ENCODE measurements at regions of chr6 and their contacts with region 1.

Region 1: GRCh38 chr6:163309491-163310026 is 105.0 kb upstream of the QKI start:
- DNase-seq: peak; percentile 82
- ATAC-seq: peak; percentile 65
- H3K4me3 ChIP-seq: peak overlapping the region; percentile 52
- H3K27ac ChIP-seq: peak overlapping the region; percentile 98
- H3K4me1 ChIP-seq: peaks cover 50% of the 10 kb centered on the region
- H3K27me3 ChIP-seq: no peaks in the 10 kb centered on the region
- CTCF ChIP-seq: no peak

Region 2: GRCh38 chr6:163180874-163181541 is 128.6 kb before region 1 on chr6:
- CTCF ChIA-PET with region 1: no interaction called
- POLR2A ChIA-PET with region 1: interaction called, 3 read pairs
- intact Hi-C with region 1: loop called (anchors 1 kb)
- DNase-seq: peak; percentile 77
- ATAC-seq: peak; percentile 97
- H3K4me3 ChIP-seq: no peak overlapping the region
- H3K27ac ChIP-seq: no peak overlapping the region
- H3K4me1 ChIP-seq: peaks cover 4% of the 10 kb centered on the region; the same call in 1 of the 2 replicates
- H3K27me3 ChIP-seq: no peaks in the 10 kb centered on the region
- CTCF ChIP-seq: peak; percentile 84

Region 3: DNA sequence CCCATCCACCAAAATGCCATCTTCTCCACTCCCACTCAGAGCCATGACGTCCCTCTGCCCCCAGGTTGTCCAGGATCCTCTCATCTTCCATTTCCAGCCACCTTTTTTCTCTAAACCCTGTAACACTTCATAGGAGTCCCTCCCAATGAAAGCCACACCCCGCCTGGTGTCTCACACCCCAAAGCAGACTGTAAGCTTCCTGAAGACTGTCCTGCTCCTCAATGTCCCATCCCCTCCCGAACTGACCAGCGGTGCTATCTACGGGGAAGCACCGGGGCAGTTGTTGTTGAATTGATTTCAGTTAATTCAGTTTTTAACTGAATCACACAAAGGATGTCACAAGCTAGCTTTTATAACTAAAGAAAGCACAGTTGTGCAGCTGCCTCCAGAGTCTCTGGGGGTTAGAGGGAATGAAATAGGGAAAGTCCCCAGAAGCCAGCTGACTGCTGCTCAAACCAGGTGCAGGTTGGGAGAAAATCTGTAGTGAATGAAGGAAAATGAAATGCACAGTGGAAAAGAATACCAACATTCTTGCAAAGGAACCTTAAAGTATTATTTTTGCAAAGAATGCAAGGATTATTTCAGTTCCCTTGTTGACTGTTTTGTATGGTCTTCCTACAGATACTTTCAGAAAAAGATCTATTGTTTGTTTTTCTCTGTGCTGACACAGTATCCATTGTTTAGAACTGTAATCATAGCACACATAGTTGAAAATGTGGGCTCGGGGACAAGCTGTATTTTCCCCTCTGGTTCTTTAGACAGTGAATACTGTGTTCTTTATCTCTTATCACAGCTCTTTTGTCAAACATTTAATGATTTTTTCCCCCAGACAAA is 117.6 kb before region 1 on chr6:
- CTCF ChIA-PET with region 1: no interaction called
- POLR2A ChIA-PET with region 1: no interaction called
- intact Hi-C with region 1: no loop called
- DNase-seq: no peak
- ATAC-seq: no peak
- H3K4me3 ChIP-seq: no peak overlapping the region
- H3K27ac ChIP-seq: no peak overlapping the region
- H3K4me1 ChIP-seq: no peaks in the 10 kb centered on the region
- H3K27me3 ChIP-seq: no peaks in the 10 kb centered on the region
- CTCF ChIP-seq: no peak

Region 4: DNA sequence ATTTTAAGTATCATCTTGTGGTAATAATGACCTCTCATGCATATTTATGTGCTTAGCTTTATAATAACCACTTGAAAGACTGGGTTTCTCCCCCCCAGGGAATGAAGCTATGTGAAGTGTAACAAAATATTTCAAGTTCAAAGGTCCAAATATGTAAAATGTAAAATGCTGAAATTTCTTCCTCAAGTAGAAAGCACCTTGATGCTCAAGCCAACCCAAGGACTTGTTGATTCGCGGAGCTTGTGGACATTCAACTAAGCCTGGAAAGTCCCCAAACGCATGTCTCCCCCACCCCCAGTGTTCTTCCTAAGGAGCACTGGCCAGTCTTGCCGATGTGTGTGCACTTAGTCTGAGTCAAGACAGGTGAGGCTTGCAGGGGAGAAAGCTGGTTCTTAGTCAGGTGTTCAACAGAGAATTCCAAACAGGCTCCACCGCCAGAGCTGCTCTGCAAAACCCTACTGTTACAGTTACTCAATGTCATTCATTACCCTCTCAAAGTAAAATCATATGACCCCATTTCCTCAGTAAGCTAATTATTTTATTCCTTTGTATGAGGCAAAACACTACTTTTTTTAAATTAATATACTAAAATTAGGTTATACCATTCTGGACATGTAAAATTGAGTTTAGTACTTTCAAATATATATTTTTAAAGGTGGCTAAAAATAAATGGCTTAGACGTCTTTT is 58.1 kb after region 1 on chr6:
- CTCF ChIA-PET with region 1: no interaction called
- POLR2A ChIA-PET with region 1: no interaction called
- intact Hi-C with region 1: no loop called
- DNase-seq: no peak
- ATAC-seq: no peak
- H3K4me3 ChIP-seq: no peak overlapping the region
- H3K27ac ChIP-seq: no peak overlapping the region
- H3K4me1 ChIP-seq: no peaks in the 10 kb centered on the region
- H3K27me3 ChIP-seq: no peaks in the 10 kb centered on the region
- CTCF ChIP-seq: no peak

Region 5: GRCh38 chr6:163392533-163392932 is 83.0 kb after region 1 on chr6:
- CTCF ChIA-PET with region 1: no interaction called
- POLR2A ChIA-PET with region 1: no interaction called
- intact Hi-C with region 1: loop called (anchors 1 kb)
- DNase-seq: peak; percentile 81
- ATAC-seq: peak; percentile 66
- H3K4me3 ChIP-seq: peak overlapping the region; percentile 56
- H3K27ac ChIP-seq: peak overlapping the region; percentile 81
- H3K4me1 ChIP-seq: peaks cover 32% of the 10 kb centered on the region
- H3K27me3 ChIP-seq: no peaks in the 10 kb centered on the region
- CTCF ChIP-seq: no peak